Heart left ventricle (tissue), 16 donors: ENCODE measurements at regions of chr5 and their contacts with region 1.

Region 1: GRCh38 chr5:54658014-54658413 is 140.5 kb downstream of the SNX18 start:
- DNase-seq: peak in 2 of 5 donors; percentile 49 to 61
- ATAC-seq: peak in 1 of 4 donors; percentile 67
- H3K4me3 ChIP-seq: no peak overlapping the region
- H3K27ac ChIP-seq: peak overlapping the region in 2 of 12 donors; percentile 17 to 41
- H3K4me1 ChIP-seq: peaks cover 0 to 25% (median 9%) of the 10 kb centered on the region in 12 donors
- H3K27me3 ChIP-seq: no peaks in the 10 kb centered on the region
- CTCF ChIP-seq: no peak
- POLR2A ChIP-seq: no peak

Region 2: DNA sequence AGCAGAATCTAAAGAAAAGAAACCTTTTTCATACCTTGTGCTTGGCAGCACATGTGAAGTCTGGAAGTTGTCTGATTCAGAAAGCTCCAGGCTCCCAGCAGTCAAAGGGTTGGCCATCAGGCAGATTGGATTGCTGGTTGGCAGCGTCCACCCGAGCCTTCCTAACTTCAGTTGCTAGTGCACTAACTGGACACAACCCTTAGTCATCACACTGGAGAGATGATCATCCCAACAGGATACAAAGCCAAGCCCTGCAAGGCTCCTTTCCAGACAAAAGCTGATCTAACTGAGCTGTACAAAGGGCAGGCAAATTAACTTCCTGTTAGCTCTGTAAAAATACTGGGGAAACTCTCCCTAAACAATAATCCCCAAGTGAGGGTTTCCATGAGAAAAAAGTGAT is 45.1 kb after region 1 on chr5:
- intact Hi-C with region 1: loop called in 1 of 10 experiments (anchors 5 kb)
- DNase-seq: peak in 3 of 5 donors; percentile 53 to 73 (median 65)
- ATAC-seq: peak; percentile 52 to 73 (median 59)
- H3K4me3 ChIP-seq: no peak overlapping the region
- H3K27ac ChIP-seq: peak overlapping the region in 7 of 12 donors; percentile 3 to 67 (median 31)
- H3K4me1 ChIP-seq: peaks cover 0 to 58% (median 36%) of the 10 kb centered on the region in 12 donors
- H3K27me3 ChIP-seq: no peaks in the 10 kb centered on the region
- CTCF ChIP-seq: no peak
- POLR2A ChIP-seq: no peak

Region 3: DNA sequence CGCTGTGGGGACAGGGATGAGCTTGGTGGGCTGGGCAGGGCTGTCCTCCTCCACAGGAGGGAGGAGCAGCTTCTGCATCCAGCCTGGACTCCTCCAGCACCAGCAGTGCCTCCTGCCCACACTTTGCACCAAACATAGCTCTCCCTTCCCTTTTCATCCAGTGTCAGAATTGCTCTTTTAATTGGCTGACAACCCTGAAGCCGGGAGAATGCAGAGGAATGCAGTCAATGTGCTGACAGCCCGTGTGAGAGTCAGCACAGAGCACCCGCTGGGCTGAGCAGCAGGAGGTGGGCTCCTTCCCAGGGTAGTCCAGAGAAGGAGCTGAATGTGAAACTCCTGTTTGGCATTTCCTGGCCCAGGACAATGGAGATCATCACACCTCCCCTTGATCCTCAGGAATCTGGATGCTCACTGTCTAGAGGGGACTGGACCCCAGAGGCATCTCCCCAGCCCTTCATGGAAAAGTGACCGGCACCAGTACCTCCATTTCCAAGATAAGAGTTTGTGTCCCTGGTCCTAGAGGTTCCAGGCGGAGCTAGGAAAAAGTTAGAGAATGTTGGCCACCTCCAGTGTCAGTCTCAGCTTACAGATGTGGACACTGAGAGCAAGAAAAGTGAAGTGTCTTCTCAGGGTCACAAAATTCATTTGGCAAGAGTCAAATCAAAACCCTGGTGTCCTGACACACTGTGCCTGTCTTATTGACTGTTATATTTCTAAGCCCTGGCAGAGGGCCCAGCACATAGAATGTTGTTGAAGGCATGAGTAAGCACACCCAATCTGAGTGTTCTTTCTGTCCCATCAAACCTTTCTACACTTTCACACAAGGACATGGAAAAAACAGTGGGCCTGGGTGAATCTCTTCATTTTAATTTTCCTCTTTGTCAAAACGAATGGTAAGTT is 61.6 kb after region 1 on chr5:
- intact Hi-C with region 1: loop called in 3 of 10 experiments (anchors 5 kb)
- DNase-seq: peak in 4 of 5 donors; percentile 53 to 81 (median 66)
- ATAC-seq: peak; percentile 85 to 93 (median 90)
- H3K4me3 ChIP-seq: no peak overlapping the region
- H3K27ac ChIP-seq: peak overlapping the region; percentile 46 to 89 (median 71)
- H3K4me1 ChIP-seq: peaks cover 0 to 35% (median 23%) of the 10 kb centered on the region in 12 donors
- H3K27me3 ChIP-seq: no peaks in the 10 kb centered on the region
- CTCF ChIP-seq: peak in 1 of 12 donors; percentile 20
- POLR2A ChIP-seq: no peak